HepG2 (cell line): ENCODE measurements at regions of chr1 and their contacts with region 1.

Region 1: GRCh38 chr1:65254319-65255034 is 54.9 kb upstream of the DNAJC6 start:
- DNase-seq: peak; percentile 38
- ATAC-seq: peak; percentile 93
- H3K4me3 ChIP-seq: peak overlapping the region; percentile 69 to 88 (median 86)
- H3K27ac ChIP-seq: no peak overlapping the region
- H3K4me1 ChIP-seq: peaks cover 22% of the 10 kb centered on the region
- H3K27me3 ChIP-seq: no peaks in the 10 kb centered on the region; a peak in 1 of 5 replicates
- CTCF ChIP-seq: peak; percentile 31; the same call in 1 of the 2 replicates
- EP300 ChIP-seq: no peak
- POLR2A ChIP-seq: peak in 1 of 2 experiments; percentile 56; a peak in 2 of 4 replicates
- RAD21 ChIP-seq: peak; percentile 47

Region 2: DNA sequence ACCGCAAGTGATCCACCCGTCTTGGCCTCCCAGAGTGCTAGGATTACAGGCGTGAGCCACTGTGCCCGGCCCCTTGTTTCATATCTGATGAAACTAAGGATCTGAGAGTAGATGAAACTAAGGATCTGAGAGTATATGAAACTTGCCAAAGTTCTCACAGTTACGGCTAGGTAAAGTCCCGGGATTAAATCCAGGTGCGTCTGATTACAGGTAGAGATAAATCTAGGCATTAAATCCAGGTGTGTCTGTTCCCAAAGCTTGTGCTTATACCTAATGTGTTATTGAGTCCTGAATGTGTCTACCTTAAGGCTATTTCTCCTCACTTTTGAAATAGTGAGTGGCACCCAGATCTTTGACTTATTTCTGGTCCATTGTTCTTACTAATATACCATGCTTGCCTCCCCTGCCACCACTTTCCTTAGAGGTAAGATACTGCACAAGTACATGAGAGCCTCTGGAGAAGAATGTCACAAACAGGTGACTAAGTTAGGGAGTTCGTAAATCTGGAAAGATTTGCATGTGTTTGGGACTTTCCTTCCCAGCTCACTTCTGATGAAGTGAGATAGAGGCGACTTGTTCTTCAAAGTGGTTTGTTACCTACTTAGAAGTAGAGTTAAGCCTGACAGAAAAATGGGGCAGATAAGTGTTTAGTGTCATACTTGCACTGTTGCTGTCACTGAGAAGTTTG is 40.0 kb before region 1 on chr1:
- CTCF ChIA-PET with region 1: no interaction called
- POLR2A ChIA-PET with region 1: no interaction called
- in situ Hi-C with region 1: no loop called
- intact Hi-C with region 1: loop called (anchors 1 kb)
- DNase-seq: no peak
- ATAC-seq: no peak
- H3K4me3 ChIP-seq: no peak overlapping the region
- H3K27ac ChIP-seq: no peak overlapping the region
- H3K4me1 ChIP-seq: peaks cover under 1% of the 10 kb centered on the region; the same call in 1 of the 2 replicates
- H3K27me3 ChIP-seq: no peaks in the 10 kb centered on the region
- CTCF ChIP-seq: no peak
- EP300 ChIP-seq: no peak
- POLR2A ChIP-seq: no peak
- RAD21 ChIP-seq: no peak